Cardiac septum (tissue), 1 donor: ENCODE measurements at regions of chr9 and their contacts with region 1.

Region 1: GRCh38 chr9:110777196-110777875 is 108.7 kb downstream of the MUSK start:
- DNase-seq: no peak

Region 2: GRCh38 chr9:110543631-110544051 is 233.7 kb before region 1 on chr9:
- intact Hi-C with region 1: no loop called
- DNase-seq: no peak

Region 3: GRCh38 chr9:111298731-111299598 is 521.6 kb after region 1 on chr9:
- intact Hi-C with region 1: loop called (anchors 10 kb)
- DNase-seq: no peak